ENCODE measurements at regions of chr4 and their contacts with region 1.

Region 1: DNA sequence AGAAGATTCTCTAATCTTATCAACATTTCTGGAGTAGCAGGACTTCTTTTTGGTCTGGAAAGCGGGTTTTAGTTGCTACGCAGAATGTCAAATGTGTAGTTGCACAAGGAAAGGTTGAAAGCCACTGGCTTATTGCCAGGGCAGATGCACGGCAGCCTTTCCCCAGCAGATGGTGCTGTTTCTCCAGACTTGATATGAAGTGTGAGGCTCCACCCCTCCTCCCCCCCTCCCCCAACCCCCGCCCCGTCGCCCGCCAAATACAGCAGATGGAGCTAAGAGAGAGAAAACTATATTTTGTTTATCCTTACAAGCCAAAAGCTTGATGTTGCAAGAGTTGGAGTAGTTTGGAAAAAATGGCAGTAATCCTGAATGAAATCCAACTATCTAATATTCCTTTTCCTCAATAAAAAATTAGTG is 32.0 kb downstream of the ENOPH1 start:
- DNase-seq: peak; percentile 93
- H3K4me3 Mint-ChIP-seq: no peak overlapping the region
- H3K27ac Mint-ChIP-seq: no peak overlapping the region
- H3K4me1 Mint-ChIP-seq: peaks cover 2% of the 10 kb centered on the region
- H3K27me3 Mint-ChIP-seq: no peaks in the 10 kb centered on the region

Region 2: DNA sequence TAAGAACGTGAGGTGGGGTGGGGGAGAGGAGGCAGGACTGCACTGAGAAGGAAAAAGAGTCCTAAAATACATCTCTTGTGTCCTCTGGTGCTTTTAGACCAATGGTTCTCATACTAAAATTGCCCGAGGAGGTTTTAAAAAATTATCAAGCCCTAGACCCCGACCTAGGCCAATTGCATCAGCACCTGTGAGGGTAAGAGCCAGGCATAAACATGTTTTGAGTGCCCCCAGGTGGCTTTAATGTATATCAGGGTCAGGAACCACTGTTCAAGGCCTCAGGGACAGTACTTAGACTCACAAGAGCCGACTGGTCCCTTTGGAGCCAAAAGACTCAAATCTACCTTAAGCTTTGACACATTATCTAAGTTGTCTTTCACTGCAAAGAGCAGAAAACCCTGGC is 136.9 kb after region 1 on chr4:
- CTCF ChIA-PET with region 1: interaction called, 3 read pairs
- intact Hi-C with region 1: loop called (anchors 1 kb)
- DNase-seq: no peak
- H3K4me3 Mint-ChIP-seq: no peak overlapping the region
- H3K27ac Mint-ChIP-seq: no peak overlapping the region
- H3K4me1 Mint-ChIP-seq: no peaks in the 10 kb centered on the region
- H3K27me3 Mint-ChIP-seq: peaks cover 5% of the 10 kb centered on the region

Region 3: GRCh38 chr4:82798168-82799005 is 336.0 kb after region 1 on chr4 and contains the start of gene SCD5:
- CTCF ChIA-PET with region 1: no interaction called
- intact Hi-C with region 1: loop called (anchors 5 kb)
- DNase-seq: peak; percentile 31
- H3K4me3 Mint-ChIP-seq: peak within 1 kb of the TSS; percentile 73
- H3K27ac Mint-ChIP-seq: no peak within 1 kb of the TSS
- H3K4me1 Mint-ChIP-seq: peaks cover 15% of the 10 kb centered on the region
- H3K27me3 Mint-ChIP-seq: peaks cover 42% of the 10 kb centered on the region
- total RNA-seq, gene SCD5: 0.12 to 0.35 TPM

Measured in activated naive CD4-positive, alpha-beta T cell treated with anti-CD3 and anti-CD28 coated beads for 36 hours (primary cell).